Activated CD4-positive, alpha-beta T cell treated with anti-CD3 and anti-CD28 coated beads for 36 hours (primary cell): ENCODE measurements at regions of chr2 and their contacts with region 1.

Region 1: GRCh38 chr2:144449028-144449406 is 70.9 kb downstream of the ZEB2 start:
- DNase-seq: no peak
- ATAC-seq: no peak
- H3K4me3 Mint-ChIP-seq: no peak overlapping the region
- H3K27ac Mint-ChIP-seq: no peak overlapping the region
- H3K4me1 Mint-ChIP-seq: peaks cover 24% of the 10 kb centered on the region
- H3K27me3 Mint-ChIP-seq: peaks cover 18% of the 10 kb centered on the region

Region 2: GRCh38 chr2:144430722-144431391 is 18.2 kb before region 1 on chr2:
- CTCF ChIA-PET with region 1: interaction called, 12 read pairs
- POLR2A ChIA-PET with region 1: interaction called, 5 read pairs
- intact Hi-C with region 1: no loop called
- DNase-seq: no peak
- ATAC-seq: peak; percentile 73
- H3K4me3 Mint-ChIP-seq: no peak overlapping the region
- H3K27ac Mint-ChIP-seq: no peak overlapping the region
- H3K4me1 Mint-ChIP-seq: peaks cover 2% of the 10 kb centered on the region
- H3K27me3 Mint-ChIP-seq: no peaks in the 10 kb centered on the region

Region 3: DNA sequence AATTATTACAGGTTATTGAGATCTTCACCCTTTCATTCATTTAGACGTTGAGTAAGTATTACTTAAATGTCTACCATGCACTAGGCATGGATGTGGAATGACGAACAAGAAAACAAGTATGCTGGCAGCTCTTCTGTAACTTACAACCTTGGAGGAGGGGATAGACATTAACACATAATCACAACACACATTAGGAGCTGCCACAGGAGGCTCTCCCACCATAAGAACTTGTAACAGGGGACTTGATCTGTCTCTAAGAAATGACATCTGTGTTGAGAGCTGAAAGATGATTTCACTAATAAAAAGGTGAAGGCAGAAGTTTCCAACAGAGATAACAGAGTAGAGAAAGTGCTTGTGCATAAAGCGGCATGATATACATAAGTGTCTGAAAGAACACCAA is 455.6 kb after region 1 on chr2:
- CTCF ChIA-PET with region 1: no interaction called
- POLR2A ChIA-PET with region 1: no interaction called
- intact Hi-C with region 1: no loop called
- DNase-seq: no peak
- ATAC-seq: no peak
- H3K4me3 Mint-ChIP-seq: no peak overlapping the region
- H3K27ac Mint-ChIP-seq: no peak overlapping the region
- H3K4me1 Mint-ChIP-seq: no peaks in the 10 kb centered on the region
- H3K27me3 Mint-ChIP-seq: peaks cover 5% of the 10 kb centered on the region